PC-3 (cell line): ENCODE measurements at regions of chr6 and their contacts with region 1.

Region 1: GRCh38 chr6:46983007-46983411 is 59.1 kb downstream of the ADGRF1 start:
- DNase-seq: peak; percentile 98
- ATAC-seq: peak; percentile 86
- H3K4me3 ChIP-seq: no peak overlapping the region
- H3K27ac ChIP-seq: peak overlapping the region; percentile 91
- H3K4me1 ChIP-seq: peaks cover 62% of the 10 kb centered on the region
- H3K27me3 ChIP-seq: no peaks in the 10 kb centered on the region
- CTCF ChIP-seq: peak; percentile 54

Region 2: DNA sequence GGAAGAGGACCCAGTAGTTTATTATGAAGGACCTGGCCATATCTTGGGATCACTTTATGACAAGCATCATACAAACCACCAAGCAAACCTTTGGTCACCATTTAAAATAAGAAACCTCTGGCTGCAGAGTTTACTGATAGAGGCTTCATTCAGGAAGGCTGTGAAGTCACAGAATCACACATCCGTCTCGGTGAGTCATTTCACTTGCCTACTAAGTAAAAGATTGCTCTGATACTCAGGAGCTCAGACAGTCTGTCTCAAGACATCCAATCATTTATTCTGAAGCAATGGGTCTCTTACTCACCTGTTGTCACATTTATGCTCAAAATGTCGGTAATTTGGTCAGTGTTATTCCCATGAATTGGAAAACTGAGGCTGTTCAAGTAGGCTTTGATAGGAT is 95.0 kb before region 1 on chr6:
- CTCF ChIA-PET with region 1: no interaction called
- POLR2A ChIA-PET with region 1: no interaction called
- intact Hi-C with region 1: loop called (anchors 1 kb)
- DNase-seq: peak; percentile 90
- ATAC-seq: peak; percentile 87
- H3K4me3 ChIP-seq: peak overlapping the region; percentile 37; the same call in 1 of the 2 replicates
- H3K27ac ChIP-seq: peak overlapping the region; percentile 96
- H3K4me1 ChIP-seq: peaks cover 30% of the 10 kb centered on the region
- H3K27me3 ChIP-seq: no peaks in the 10 kb centered on the region
- CTCF ChIP-seq: no peak

Region 3: DNA sequence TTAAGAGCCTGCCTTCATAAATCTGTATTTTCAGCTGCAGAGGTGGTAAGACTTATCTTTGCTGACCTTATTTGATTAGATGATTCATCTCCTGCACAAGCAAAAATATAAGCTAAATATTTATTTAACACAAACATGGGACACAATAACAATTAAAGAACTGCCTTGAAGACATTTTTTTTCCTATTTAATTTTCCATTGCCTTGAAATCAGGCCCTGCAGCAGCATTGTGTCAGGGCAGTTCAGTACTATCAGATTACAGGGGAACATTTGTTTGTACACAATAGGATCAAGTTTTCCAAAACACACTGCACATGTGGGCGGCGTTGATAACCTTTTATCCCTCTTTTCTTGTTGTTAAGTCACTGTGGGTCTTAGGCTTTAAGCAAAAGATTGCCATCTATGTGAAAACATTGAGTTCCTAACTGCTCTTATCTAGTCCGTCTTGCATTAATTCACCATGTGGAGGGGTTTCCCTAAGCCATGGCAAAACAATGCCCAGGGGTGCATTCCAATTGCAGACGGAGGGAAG is 68.7 kb before region 1 on chr6:
- CTCF ChIA-PET with region 1: no interaction called
- POLR2A ChIA-PET with region 1: no interaction called
- intact Hi-C with region 1: loop called (anchors 1 kb)
- DNase-seq: peak; percentile 65
- ATAC-seq: peak; percentile 86
- H3K4me3 ChIP-seq: no peak overlapping the region
- H3K27ac ChIP-seq: peak overlapping the region; percentile 31
- H3K4me1 ChIP-seq: peaks cover 17% of the 10 kb centered on the region
- H3K27me3 ChIP-seq: no peaks in the 10 kb centered on the region
- CTCF ChIP-seq: no peak

Region 4: GRCh38 chr6:46925563-46926253 is 57.3 kb before region 1 on chr6:
- CTCF ChIA-PET with region 1: interaction called, 8 read pairs
- POLR2A ChIA-PET with region 1: no interaction called
- intact Hi-C with region 1: loop called (anchors 1 kb)
- DNase-seq: peak; percentile 91
- ATAC-seq: peak; percentile 80
- H3K4me3 ChIP-seq: peak overlapping the region; percentile 14; the same call in 1 of the 2 replicates
- H3K27ac ChIP-seq: peak overlapping the region; percentile 97
- H3K4me1 ChIP-seq: peaks cover 42% of the 10 kb centered on the region
- H3K27me3 ChIP-seq: no peaks in the 10 kb centered on the region
- CTCF ChIP-seq: no peak